ENCODE measurements at regions of chr6 and their contacts with region 1.

Region 1: GRCh38 chr6:158026054-158026900 is 44.6 kb downstream of the SYNJ2 start:
- DNase-seq: peak; percentile 93
- ATAC-seq: peak; percentile 80
- H3K4me3 Mint-ChIP-seq: peak overlapping the region; percentile 74
- H3K27ac Mint-ChIP-seq: peak overlapping the region; percentile 100
- H3K4me1 Mint-ChIP-seq: peaks cover 34% of the 10 kb centered on the region
- H3K27me3 Mint-ChIP-seq: no peaks in the 10 kb centered on the region
- CTCF ChIP-seq: peak; percentile 92

Region 2: GRCh38 chr6:157981395-157982296 is 44.6 kb before region 1 on chr6 and contains the start of gene SYNJ2:
- CTCF ChIA-PET with region 1: interaction called, 25 read pairs
- POLR2A ChIA-PET with region 1: interaction called, 13 read pairs
- intact Hi-C with region 1: loop called (anchors 5 kb)
- DNase-seq: peak; percentile 82
- ATAC-seq: peak; percentile 87
- H3K4me3 Mint-ChIP-seq: peak within 1 kb of the TSS; percentile 91
- H3K27ac Mint-ChIP-seq: peak within 1 kb of the TSS; percentile 85
- H3K4me1 Mint-ChIP-seq: peaks cover 42% of the 10 kb centered on the region
- H3K27me3 Mint-ChIP-seq: no peaks in the 10 kb centered on the region
- CTCF ChIP-seq: peak; percentile 73
- total RNA-seq, gene SYNJ2: 27.7 to 28.5 TPM

Region 3: GRCh38 chr6:158002951-158003853 is 23.1 kb before region 1 on chr6:
- CTCF ChIA-PET with region 1: interaction called, 16 read pairs
- POLR2A ChIA-PET with region 1: interaction called, 5 read pairs
- intact Hi-C with region 1: no loop called
- DNase-seq: peak; percentile 74
- ATAC-seq: peak; percentile 84
- H3K4me3 Mint-ChIP-seq: no peak overlapping the region
- H3K27ac Mint-ChIP-seq: peak overlapping the region; percentile 64
- H3K4me1 Mint-ChIP-seq: peaks cover 43% of the 10 kb centered on the region
- H3K27me3 Mint-ChIP-seq: no peaks in the 10 kb centered on the region
- CTCF ChIP-seq: no peak

Region 4: DNA sequence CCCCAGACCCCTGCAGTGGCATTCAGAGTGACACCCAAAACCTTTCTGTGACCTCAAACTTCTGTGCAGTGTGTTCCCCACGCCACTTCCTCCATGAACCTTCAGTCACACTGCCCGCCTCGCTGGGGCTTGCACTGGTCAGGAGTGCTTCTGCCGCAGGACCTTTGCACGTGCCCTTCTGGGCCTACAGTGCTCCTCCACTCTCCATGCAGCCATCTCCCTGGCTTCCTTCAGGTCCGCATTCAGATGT is 17.5 kb before region 1 on chr6:
- CTCF ChIA-PET with region 1: interaction called, 60 read pairs
- POLR2A ChIA-PET with region 1: interaction called, 8 read pairs
- intact Hi-C with region 1: no loop called
- DNase-seq: no peak
- ATAC-seq: peak; percentile 28
- H3K4me3 Mint-ChIP-seq: no peak overlapping the region
- H3K27ac Mint-ChIP-seq: peak overlapping the region; percentile 72
- H3K4me1 Mint-ChIP-seq: peaks cover 67% of the 10 kb centered on the region
- H3K27me3 Mint-ChIP-seq: no peaks in the 10 kb centered on the region
- CTCF ChIP-seq: no peak

Region 5: DNA sequence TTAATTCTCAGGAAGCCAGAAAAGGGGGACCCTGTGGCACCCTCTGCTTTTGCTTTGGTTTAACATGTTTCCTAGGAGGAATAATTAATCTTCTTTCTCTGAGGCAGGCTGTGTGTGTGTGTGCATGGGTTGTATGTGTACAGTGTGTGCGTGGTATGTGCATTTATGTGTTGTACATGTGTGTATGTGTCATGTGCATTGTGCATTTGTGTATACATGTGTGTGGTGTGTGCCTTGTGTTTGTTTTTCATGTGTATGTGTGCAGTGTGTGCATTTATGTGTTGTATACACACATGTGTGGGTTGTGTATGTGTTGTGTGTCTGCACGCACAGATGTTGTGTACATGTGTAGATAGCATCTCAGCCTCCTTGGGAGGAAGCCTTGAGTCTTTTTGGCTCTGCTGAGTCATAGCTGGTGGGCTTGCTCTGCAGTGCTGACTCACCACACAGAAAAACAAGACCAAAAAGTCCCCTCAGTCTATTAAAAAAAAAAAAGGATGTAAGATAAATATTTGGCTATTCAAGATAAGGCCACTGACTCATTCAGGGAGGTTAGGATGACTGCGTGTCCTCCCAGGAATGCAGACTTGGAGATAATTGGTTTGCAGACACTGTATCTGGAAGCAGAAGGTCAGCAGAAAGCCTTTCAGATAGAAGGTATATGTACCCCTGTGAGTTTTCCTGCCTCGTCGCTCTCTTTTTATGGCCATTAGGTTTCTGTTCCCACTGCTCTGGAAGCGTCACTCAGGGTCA is 13.9 kb after region 1 on chr6:
- CTCF ChIA-PET with region 1: interaction called, 33 read pairs
- POLR2A ChIA-PET with region 1: interaction called, 10 read pairs
- intact Hi-C with region 1: no loop called
- DNase-seq: peak; percentile 60
- ATAC-seq: peak; percentile 77
- H3K4me3 Mint-ChIP-seq: no peak overlapping the region
- H3K27ac Mint-ChIP-seq: peak overlapping the region; percentile 56
- H3K4me1 Mint-ChIP-seq: peaks cover 27% of the 10 kb centered on the region
- H3K27me3 Mint-ChIP-seq: no peaks in the 10 kb centered on the region
- CTCF ChIP-seq: no peak

Region 6: DNA sequence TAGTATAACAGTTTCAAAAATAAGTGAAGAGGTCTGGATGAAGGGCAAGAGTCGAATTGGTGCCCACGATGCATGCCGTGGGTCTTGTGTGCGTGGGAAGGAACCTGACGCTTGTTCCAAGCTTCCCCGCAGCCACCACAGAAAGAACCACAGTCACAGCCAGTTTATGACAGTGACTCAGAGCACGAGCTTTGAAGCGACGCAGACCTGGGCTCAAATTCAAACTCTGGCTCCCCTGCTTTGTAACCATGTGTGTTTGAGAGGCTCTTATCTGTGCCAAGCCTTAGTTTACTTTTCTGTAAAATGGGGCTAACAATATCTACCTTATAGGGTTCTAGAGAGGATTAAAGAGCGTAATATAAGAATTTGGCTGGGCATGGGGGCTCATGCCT is 20.8 kb after region 1 on chr6:
- CTCF ChIA-PET with region 1: interaction called, 33 read pairs
- POLR2A ChIA-PET with region 1: interaction called, 22 read pairs
- intact Hi-C with region 1: no loop called
- DNase-seq: peak; percentile 88
- ATAC-seq: peak; percentile 60
- H3K4me3 Mint-ChIP-seq: peak overlapping the region; percentile 9
- H3K27ac Mint-ChIP-seq: peak overlapping the region; percentile 72
- H3K4me1 Mint-ChIP-seq: peaks cover 26% of the 10 kb centered on the region
- H3K27me3 Mint-ChIP-seq: no peaks in the 10 kb centered on the region
- CTCF ChIP-seq: no peak

Region 7: GRCh38 chr6:158231551-158232315 is 205.5 kb after region 1 on chr6:
- CTCF ChIA-PET with region 1: no interaction called
- POLR2A ChIA-PET with region 1: no interaction called
- intact Hi-C with region 1: no loop called
- DNase-seq: peak; percentile 68
- ATAC-seq: peak; percentile 77
- H3K4me3 Mint-ChIP-seq: peak overlapping the region; percentile 86
- H3K27ac Mint-ChIP-seq: peak overlapping the region; percentile 85
- H3K4me1 Mint-ChIP-seq: peaks cover 30% of the 10 kb centered on the region
- H3K27me3 Mint-ChIP-seq: no peaks in the 10 kb centered on the region
- CTCF ChIP-seq: no peak